Calu3 (cell line): ENCODE measurements at regions of chr7 and their contacts with region 1.

Region 1: DNA sequence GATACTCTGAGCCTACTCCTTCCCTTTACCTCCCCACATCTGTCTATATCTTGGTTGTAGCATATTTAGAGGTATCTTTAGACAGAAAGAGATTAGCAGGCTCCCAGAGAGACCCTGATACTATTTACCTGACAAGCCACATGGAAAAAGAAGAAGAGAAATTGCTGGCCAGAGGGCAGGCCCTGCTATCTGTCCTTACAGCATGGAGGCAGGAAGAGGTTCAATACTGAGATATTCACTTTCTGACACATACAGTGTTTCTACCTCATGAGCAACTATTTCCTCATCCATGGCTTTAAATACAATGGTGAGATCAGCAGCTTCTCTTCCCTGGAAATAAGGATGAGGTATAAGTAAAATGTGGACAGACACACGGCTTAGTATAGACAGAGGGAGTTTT is 33.9 kb upstream of the TSPAN13 start:
- DNase-seq: no peak
- H3K4me3 Mint-ChIP-seq: no peak overlapping the region
- H3K27ac Mint-ChIP-seq: peak overlapping the region; percentile 14
- H3K4me1 Mint-ChIP-seq: peaks cover 23% of the 10 kb centered on the region
- H3K27me3 Mint-ChIP-seq: no peaks in the 10 kb centered on the region
- CTCF ChIP-seq: no peak

Region 2: DNA sequence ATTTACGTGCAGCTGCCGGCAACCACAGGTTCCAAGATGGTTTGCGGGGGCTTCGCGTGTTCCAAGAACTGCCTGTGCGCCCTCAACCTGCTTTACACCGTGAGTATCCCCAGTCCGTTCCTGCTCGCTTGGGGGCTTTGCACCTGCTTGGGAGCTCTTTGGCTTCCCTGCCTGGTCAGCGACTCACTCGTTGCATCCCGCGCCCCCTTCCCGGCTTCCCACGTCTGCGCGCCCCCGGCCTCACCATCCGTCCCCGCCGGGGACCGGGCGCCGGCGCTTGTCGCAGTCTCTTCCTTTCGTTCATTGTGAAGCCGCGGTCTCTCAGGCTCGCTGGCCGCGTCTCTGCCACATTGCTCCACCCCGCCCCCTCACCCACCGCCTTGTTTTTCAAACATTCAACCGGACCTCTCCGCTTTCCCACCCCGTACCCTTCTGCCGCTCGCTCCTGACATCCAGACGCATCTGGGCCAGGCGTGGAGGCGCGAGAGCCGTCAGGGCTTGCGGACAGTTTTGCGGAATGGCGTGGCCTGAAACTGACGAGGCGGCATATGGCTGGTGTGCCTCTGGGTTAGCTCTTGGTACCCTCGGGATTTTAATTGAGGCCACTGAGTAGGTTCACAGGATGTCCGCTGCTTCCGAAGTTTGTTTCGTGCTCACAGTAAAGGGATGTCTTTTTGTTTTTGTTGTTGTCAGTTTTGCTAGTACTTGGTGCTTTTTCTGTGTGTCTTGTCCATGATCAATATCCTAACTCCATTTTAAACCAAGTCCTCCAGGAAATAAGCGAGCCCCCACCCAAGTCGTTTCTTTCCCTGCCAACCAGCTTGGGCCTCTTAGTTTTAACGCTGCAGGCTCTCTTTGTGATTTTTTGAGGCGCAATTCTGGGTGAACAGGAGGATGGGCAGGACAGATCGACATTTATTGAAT is 34.5 kb after region 1 on chr7:
- CTCF ChIA-PET with region 1: no interaction called
- intact Hi-C with region 1: loop called (anchors 2 kb)
- DNase-seq: peak; percentile 71
- H3K4me3 Mint-ChIP-seq: peak overlapping the region; percentile 90
- H3K27ac Mint-ChIP-seq: peak overlapping the region; percentile 82
- H3K4me1 Mint-ChIP-seq: peaks cover 23% of the 10 kb centered on the region
- H3K27me3 Mint-ChIP-seq: no peaks in the 10 kb centered on the region
- CTCF ChIP-seq: no peak